Activated naive CD4-positive, alpha-beta T cell treated with anti-CD3 and anti-CD28 coated beads for 36 hours (primary cell): ENCODE measurements at regions of chr7 and their contacts with region 1.

Region 1: GRCh38 chr7:130486114-130486958 is 5.5 kb upstream of the MEST start:
- DNase-seq: peak; percentile 70
- H3K4me3 Mint-ChIP-seq: peak overlapping the region; percentile 74
- H3K27ac Mint-ChIP-seq: no peak overlapping the region
- H3K4me1 Mint-ChIP-seq: peaks cover 23% of the 10 kb centered on the region
- H3K27me3 Mint-ChIP-seq: peaks cover 9% of the 10 kb centered on the region

Region 2: GRCh38 chr7:130242198-130243014 is 243.9 kb before region 1 on chr7:
- CTCF ChIA-PET with region 1: interaction called, 5 read pairs
- intact Hi-C with region 1: loop called (anchors 1 kb)
- DNase-seq: peak; percentile 76
- H3K4me3 Mint-ChIP-seq: no peak overlapping the region
- H3K27ac Mint-ChIP-seq: no peak overlapping the region
- H3K4me1 Mint-ChIP-seq: peaks cover 9% of the 10 kb centered on the region
- H3K27me3 Mint-ChIP-seq: no peaks in the 10 kb centered on the region

Region 3: DNA sequence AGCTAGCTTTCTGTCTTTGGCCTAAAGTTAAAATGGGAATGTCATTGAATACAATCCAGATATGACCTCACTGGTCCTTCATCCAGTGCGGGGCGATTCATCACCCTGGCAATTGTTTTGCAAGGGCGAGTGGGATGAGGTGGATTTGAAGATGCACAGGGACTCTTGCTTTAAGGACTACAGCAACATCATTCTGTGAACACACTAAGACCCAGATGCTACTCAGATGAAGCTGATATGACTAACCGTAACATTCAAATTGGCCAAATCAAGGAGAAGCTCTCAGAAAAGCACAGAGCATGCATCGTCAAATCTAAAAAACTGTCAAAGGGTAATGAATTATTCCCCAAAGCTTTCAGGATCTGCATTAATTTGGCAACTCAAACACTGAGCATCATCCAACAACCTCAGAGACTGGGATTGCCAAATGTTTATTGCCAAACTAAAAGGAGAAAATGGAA is 93.2 kb before region 1 on chr7:
- CTCF ChIA-PET with region 1: no interaction called
- intact Hi-C with region 1: loop called (anchors 5 kb)
- DNase-seq: no peak
- H3K4me3 Mint-ChIP-seq: no peak overlapping the region
- H3K27ac Mint-ChIP-seq: no peak overlapping the region
- H3K4me1 Mint-ChIP-seq: peaks cover 20% of the 10 kb centered on the region
- H3K27me3 Mint-ChIP-seq: no peaks in the 10 kb centered on the region

Region 4: DNA sequence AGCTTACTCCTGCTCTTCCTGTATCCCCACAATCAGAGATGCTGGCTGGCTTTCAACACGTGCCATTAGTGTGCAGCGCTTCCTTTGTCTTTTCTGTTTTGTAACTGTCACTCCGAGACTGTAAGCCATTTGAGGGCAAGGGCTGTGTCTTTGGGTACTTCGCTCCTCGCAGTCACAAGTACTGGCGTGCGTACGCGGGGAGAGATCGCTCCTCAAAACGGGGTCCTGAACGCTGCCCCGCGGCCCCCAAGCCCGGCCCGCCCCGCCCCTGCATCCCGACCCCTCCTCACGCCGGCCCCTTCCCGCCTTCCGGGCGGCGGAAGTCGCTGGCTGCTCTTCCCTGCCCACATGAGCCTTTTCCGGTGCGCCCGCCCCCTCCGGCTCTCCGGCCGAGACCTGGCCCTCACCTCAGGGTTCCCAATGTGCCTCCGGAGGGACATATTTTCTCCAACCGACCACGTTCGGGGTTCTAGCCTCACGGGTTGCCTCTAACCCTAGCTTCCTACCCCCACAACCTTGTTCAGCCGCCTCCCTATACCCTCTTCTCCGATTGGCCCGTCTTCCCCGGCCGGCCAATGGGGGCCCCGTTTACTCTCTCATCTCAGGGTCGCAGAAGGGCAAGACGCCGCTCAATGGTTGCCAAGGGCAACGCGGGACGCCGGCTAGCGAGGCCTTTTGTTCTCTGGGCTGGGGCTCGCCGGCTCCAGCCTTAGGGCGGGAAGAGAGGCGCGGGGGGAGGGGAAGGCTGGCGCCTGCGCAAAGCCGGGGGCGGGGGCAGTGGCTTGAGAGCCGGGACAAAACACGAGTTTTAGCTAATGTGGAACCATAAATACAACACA is 45.6 kb before region 1 on chr7 and contains the start of gene CEP41:
- CTCF ChIA-PET with region 1: interaction called, 3 read pairs
- intact Hi-C with region 1: loop called (anchors 5 kb)
- DNase-seq: peak; percentile 98
- H3K4me3 Mint-ChIP-seq: peak within 1 kb of the TSS; percentile 98
- H3K27ac Mint-ChIP-seq: peak within 1 kb of the TSS; percentile 98
- H3K4me1 Mint-ChIP-seq: peaks cover 50% of the 10 kb centered on the region
- H3K27me3 Mint-ChIP-seq: no peaks in the 10 kb centered on the region
- total RNA-seq, gene CEP41: 16.0 to 18.2 TPM

Region 5: GRCh38 chr7:130695840-130696239 is 209.5 kb after region 1 on chr7:
- CTCF ChIA-PET with region 1: interaction called, 5 read pairs
- intact Hi-C with region 1: loop called (anchors 10 kb)
- DNase-seq: no peak
- H3K4me3 Mint-ChIP-seq: no peak overlapping the region
- H3K27ac Mint-ChIP-seq: no peak overlapping the region
- H3K4me1 Mint-ChIP-seq: no peaks in the 10 kb centered on the region
- H3K27me3 Mint-ChIP-seq: no peaks in the 10 kb centered on the region

Region 6: DNA sequence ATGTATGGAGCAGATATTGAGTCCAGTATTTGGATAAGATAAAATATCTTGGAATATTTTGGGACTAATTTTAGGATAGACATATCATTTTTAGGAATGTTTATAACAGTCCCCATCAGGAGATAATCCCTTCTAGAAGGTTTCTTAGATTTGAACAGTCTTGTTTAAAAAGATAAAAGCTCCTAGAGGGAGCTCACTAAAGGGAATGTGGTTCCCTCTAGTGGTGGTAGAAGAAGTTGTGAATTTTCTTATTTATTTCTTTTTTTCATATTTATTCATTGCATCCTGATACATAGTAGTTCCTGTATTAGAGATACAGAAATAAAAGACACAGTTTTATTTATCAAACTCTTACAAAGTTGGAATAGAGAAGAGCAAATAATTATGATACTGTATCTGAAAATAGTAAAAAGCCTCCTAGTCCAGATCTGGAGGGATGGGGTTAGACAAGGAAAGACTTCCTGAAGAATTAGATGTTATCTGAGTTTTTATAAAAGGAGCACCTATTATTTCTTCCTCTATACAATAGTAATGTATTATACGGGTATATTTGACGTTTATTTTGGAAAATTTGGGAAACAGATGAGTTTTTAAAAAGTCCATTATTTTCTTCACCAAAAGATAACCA is 272.2 kb after region 1 on chr7:
- CTCF ChIA-PET with region 1: interaction called, 5 read pairs
- intact Hi-C with region 1: loop called (anchors 2 kb)
- DNase-seq: no peak
- H3K4me3 Mint-ChIP-seq: no peak overlapping the region
- H3K27ac Mint-ChIP-seq: no peak overlapping the region
- H3K4me1 Mint-ChIP-seq: no peaks in the 10 kb centered on the region
- H3K27me3 Mint-ChIP-seq: peaks cover 3% of the 10 kb centered on the region

Region 7: GRCh38 chr7:130831817-130832481 is 345.6 kb after region 1 on chr7:
- CTCF ChIA-PET with region 1: no interaction called
- intact Hi-C with region 1: loop called (anchors 5 kb)
- DNase-seq: no peak
- H3K4me3 Mint-ChIP-seq: no peak overlapping the region
- H3K27ac Mint-ChIP-seq: no peak overlapping the region
- H3K4me1 Mint-ChIP-seq: no peaks in the 10 kb centered on the region
- H3K27me3 Mint-ChIP-seq: peaks cover 8% of the 10 kb centered on the region